CD8-positive, alpha-beta T cell (primary cell): ENCODE measurements at regions of chr12 and their contacts with region 1.

Region 1: DNA sequence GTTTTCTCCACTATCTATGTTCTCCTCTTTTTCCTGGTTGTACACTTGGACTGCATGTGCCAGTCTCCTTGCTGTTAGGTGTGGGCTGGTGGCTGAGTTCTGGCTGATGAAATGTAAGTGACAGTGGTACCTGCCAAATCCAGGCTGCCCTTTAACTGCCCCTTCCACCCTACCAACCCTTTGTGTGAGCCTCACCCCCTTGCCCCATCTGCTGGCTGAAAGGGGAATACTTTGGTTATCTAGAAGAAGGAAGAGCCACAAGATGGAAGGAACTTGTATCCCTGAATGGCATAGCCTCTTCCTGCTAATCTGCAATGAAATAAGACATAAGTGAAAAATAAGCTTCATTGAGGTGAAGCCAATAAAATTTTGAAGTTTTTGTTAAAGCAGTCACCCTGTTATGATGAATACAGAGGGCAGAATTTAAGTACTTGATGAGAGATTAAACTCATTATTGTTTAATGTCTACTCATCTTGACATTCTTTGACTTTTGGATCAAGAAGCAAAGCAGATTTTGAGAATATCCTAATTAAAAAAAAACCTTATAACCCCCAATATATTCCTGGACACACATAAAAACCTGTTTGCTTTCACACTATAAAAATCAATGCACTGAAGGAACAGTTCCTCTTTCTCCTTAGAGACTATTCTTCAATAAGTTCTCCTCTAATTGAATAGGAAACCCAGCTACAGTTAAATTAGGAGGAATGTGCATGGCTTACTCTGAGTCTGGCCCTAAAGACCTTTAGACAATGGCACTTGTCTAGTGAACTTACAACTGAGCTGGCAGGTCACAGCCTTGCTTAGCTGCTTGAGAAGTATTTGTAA is 262.6 kb upstream of the BTG1 start:
- DNase-seq: peak in 5 of 9 experiments; percentile 12 to 74 (median 39)
- ATAC-seq: peak; percentile 26
- H3K4me3 ChIP-seq: no peak overlapping the region
- H3K4me3 Mint-ChIP-seq: no peak overlapping the region
- H3K27ac ChIP-seq: no peak overlapping the region
- H3K27ac Mint-ChIP-seq: peak overlapping the region; percentile 55
- H3K4me1 ChIP-seq: peaks cover 30% of the 10 kb centered on the region
- H3K4me1 Mint-ChIP-seq: peaks cover 55% of the 10 kb centered on the region
- H3K27me3 ChIP-seq: no peaks in the 10 kb centered on the region
- H3K27me3 Mint-ChIP-seq: no peaks in the 10 kb centered on the region
- CTCF ChIP-seq: peak; percentile 54

Region 2: GRCh38 chr12:91577586-91578539 is 830.4 kb before region 1 on chr12:
- CTCF ChIA-PET with region 1: no interaction called
- POLR2A ChIA-PET with region 1: interaction called, 3 read pairs
- intact Hi-C with region 1: loop called in 1 of 2 experiments (anchors 5 kb)
- DNase-seq: peak in 2 of 9 experiments; percentile 37 to 59
- ATAC-seq: peak; percentile 85
- H3K4me3 ChIP-seq: peak overlapping the region; percentile 34 to 39
- H3K4me3 Mint-ChIP-seq: peak overlapping the region; percentile 77
- H3K27ac ChIP-seq: no peak overlapping the region
- H3K27ac Mint-ChIP-seq: peak overlapping the region; percentile 50
- H3K4me1 ChIP-seq: no peaks in the 10 kb centered on the region
- H3K4me1 Mint-ChIP-seq: peaks cover 14% of the 10 kb centered on the region
- H3K27me3 ChIP-seq: no peaks in the 10 kb centered on the region
- H3K27me3 Mint-ChIP-seq: no peaks in the 10 kb centered on the region
- CTCF ChIP-seq: peak; percentile 87

Region 3: GRCh38 chr12:92297932-92298696 is 110.2 kb before region 1 on chr12:
- CTCF ChIA-PET with region 1: no interaction called
- POLR2A ChIA-PET with region 1: interaction called, 3 read pairs
- intact Hi-C with region 1: loop called in 1 of 2 experiments (anchors 2 kb)
- DNase-seq: peak in 4 of 9 experiments; percentile 5 to 55 (median 30)
- ATAC-seq: peak; percentile 88
- H3K4me3 ChIP-seq: no peak overlapping the region
- H3K4me3 Mint-ChIP-seq: peak overlapping the region; percentile 29
- H3K27ac ChIP-seq: peak overlapping the region; percentile 8 to 13
- H3K27ac Mint-ChIP-seq: peak overlapping the region; percentile 84
- H3K4me1 ChIP-seq: peaks cover 31% of the 10 kb centered on the region
- H3K4me1 Mint-ChIP-seq: peaks cover 15% of the 10 kb centered on the region
- H3K27me3 ChIP-seq: no peaks in the 10 kb centered on the region
- H3K27me3 Mint-ChIP-seq: no peaks in the 10 kb centered on the region
- CTCF ChIP-seq: no peak

Region 4: GRCh38 chr12:92334552-92334951 is 73.7 kb before region 1 on chr12:
- CTCF ChIA-PET with region 1: no interaction called
- POLR2A ChIA-PET with region 1: no interaction called
- intact Hi-C with region 1: no loop called
- DNase-seq: no peak
- ATAC-seq: no peak
- H3K4me3 ChIP-seq: no peak overlapping the region
- H3K4me3 Mint-ChIP-seq: no peak overlapping the region
- H3K27ac ChIP-seq: no peak overlapping the region
- H3K27ac Mint-ChIP-seq: no peak overlapping the region
- H3K4me1 ChIP-seq: peaks cover 20% of the 10 kb centered on the region
- H3K4me1 Mint-ChIP-seq: peaks cover 28% of the 10 kb centered on the region
- H3K27me3 ChIP-seq: no peaks in the 10 kb centered on the region
- H3K27me3 Mint-ChIP-seq: no peaks in the 10 kb centered on the region
- CTCF ChIP-seq: no peak

Region 5: DNA sequence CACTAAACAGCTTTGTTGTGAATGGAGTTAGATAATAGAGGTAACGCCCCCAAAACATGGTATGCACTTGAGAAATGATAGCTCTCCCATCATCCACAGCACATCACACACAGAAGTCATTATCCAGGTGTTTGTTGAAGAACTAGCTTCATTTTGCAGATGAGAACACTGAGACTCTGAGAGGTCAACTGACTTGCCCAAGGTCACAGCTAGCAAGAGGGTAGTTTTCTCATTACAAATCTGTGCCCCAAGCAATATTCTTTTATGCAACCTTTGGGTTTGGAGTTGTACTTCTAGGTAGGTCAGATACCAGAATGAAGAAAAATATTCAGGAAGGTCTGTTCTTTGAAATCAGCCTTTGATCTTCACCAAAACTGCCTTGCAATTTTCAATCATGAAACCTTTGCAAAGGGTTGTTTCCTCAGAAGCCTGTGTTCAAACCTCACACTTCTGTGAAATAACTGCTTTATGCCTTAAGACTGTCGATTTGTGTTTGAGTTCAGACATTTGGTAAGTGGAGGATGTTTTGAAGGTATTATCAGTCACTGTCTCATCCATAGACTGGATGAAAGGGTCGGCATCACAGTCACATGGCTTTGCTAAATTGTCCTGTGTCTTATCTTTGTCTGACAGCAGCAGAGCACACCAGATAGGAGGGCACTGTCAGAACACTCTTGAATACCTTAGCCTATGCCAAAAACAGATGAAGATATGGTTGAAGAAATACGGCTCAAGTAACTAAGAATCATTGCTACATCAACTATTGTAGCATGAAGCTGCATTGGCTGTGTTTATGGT is 29.4 kb before region 1 on chr12:
- CTCF ChIA-PET with region 1: no interaction called
- POLR2A ChIA-PET with region 1: interaction called, 9 read pairs
- intact Hi-C with region 1: loop called in 1 of 2 experiments (anchors 2 kb)
- DNase-seq: peak in 4 of 9 experiments; percentile 15 to 51 (median 38)
- ATAC-seq: peak; percentile 93
- H3K4me3 ChIP-seq: no peak overlapping the region
- H3K4me3 Mint-ChIP-seq: peak overlapping the region; percentile 9
- H3K27ac ChIP-seq: peak overlapping the region in 1 of 2 experiments; percentile 44
- H3K27ac Mint-ChIP-seq: peak overlapping the region; percentile 85
- H3K4me1 ChIP-seq: peaks cover 44% of the 10 kb centered on the region
- H3K4me1 Mint-ChIP-seq: peaks cover 59% of the 10 kb centered on the region
- H3K27me3 ChIP-seq: no peaks in the 10 kb centered on the region
- H3K27me3 Mint-ChIP-seq: no peaks in the 10 kb centered on the region
- CTCF ChIP-seq: no peak

Region 6: GRCh38 chr12:92421701-92422100 is 13.4 kb after region 1 on chr12:
- CTCF ChIA-PET with region 1: interaction called, 11 read pairs
- POLR2A ChIA-PET with region 1: interaction called, 7 read pairs
- intact Hi-C with region 1: no loop called
- DNase-seq: no peak
- ATAC-seq: no peak
- H3K4me3 ChIP-seq: no peak overlapping the region
- H3K4me3 Mint-ChIP-seq: no peak overlapping the region
- H3K27ac ChIP-seq: no peak overlapping the region
- H3K27ac Mint-ChIP-seq: no peak overlapping the region
- H3K4me1 ChIP-seq: peaks cover 8% of the 10 kb centered on the region
- H3K4me1 Mint-ChIP-seq: peaks cover 19% of the 10 kb centered on the region
- H3K27me3 ChIP-seq: no peaks in the 10 kb centered on the region
- H3K27me3 Mint-ChIP-seq: no peaks in the 10 kb centered on the region
- CTCF ChIP-seq: no peak

Region 7: GRCh38 chr12:92439407-92439779 is 31.1 kb after region 1 on chr12:
- CTCF ChIA-PET with region 1: no interaction called
- POLR2A ChIA-PET with region 1: no interaction called
- intact Hi-C with region 1: no loop called
- DNase-seq: no peak
- ATAC-seq: no peak
- H3K4me3 ChIP-seq: no peak overlapping the region
- H3K4me3 Mint-ChIP-seq: no peak overlapping the region
- H3K27ac ChIP-seq: no peak overlapping the region
- H3K27ac Mint-ChIP-seq: no peak overlapping the region
- H3K4me1 ChIP-seq: peaks cover 4% of the 10 kb centered on the region
- H3K4me1 Mint-ChIP-seq: peaks cover 10% of the 10 kb centered on the region
- H3K27me3 ChIP-seq: no peaks in the 10 kb centered on the region
- H3K27me3 Mint-ChIP-seq: no peaks in the 10 kb centered on the region
- CTCF ChIP-seq: no peak

Region 8: GRCh38 chr12:92634730-92635129 is 226.4 kb after region 1 on chr12:
- CTCF ChIA-PET with region 1: no interaction called
- POLR2A ChIA-PET with region 1: no interaction called
- intact Hi-C with region 1: no loop called
- DNase-seq: no peak
- ATAC-seq: no peak
- H3K4me3 ChIP-seq: no peak overlapping the region
- H3K4me3 Mint-ChIP-seq: no peak overlapping the region
- H3K27ac ChIP-seq: no peak overlapping the region
- H3K27ac Mint-ChIP-seq: no peak overlapping the region
- H3K4me1 ChIP-seq: no peaks in the 10 kb centered on the region
- H3K4me1 Mint-ChIP-seq: no peaks in the 10 kb centered on the region
- H3K27me3 ChIP-seq: no peaks in the 10 kb centered on the region
- H3K27me3 Mint-ChIP-seq: no peaks in the 10 kb centered on the region
- CTCF ChIP-seq: no peak